Gastrocnemius medialis (tissue), 4 donors: ENCODE measurements at regions of chr1 and their contacts with region 1.

Region 1: GRCh38 chr1:173202430-173203145 is 4.5 kb downstream of the TNFSF4 start:
- DNase-seq: no peak
- ATAC-seq: peak in 1 of 2 donors; percentile 57
- H3K4me3 ChIP-seq: no peak overlapping the region
- H3K27ac ChIP-seq: no peak overlapping the region
- H3K4me1 ChIP-seq: no peaks in the 10 kb centered on the region
- H3K27me3 ChIP-seq: no peaks in the 10 kb centered on the region
- CTCF ChIP-seq: peak; percentile 15 to 54 (median 35)
- POLR2A ChIP-seq: no peak

Region 2: DNA sequence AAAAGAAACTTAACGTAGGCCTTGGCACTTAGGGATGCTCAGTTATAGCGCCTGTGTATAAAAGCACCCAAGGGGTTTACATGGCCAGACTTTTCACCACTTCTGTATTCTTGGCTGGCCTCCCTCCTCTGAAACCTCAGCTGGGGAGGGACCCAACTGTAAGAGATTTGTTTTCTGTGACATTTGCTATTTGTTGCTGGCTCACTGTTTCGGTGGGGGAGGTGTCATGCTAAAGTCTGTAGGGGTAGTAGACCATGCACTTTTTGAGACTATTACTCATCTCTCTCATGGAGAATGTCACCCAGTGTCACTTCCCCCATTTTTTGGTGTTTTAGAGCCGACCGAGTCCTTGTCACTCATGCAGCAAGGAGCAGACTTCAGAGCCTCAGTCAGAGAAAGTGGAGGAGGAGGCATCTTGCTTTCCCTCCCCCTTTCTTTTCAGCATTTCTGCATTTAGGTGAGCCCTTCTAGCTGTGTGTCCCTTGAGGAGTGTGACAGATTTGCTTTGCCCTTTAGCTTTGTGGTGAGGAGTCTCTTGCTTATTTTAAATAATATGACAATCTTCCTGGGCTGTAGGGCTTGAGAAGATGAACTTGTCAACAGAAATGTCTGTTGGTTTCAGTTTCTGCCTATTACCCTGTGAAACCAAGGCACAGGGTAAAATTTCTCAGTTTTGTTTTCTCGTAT is 383.6 kb before region 1 on chr1:
- in situ Hi-C with region 1: loop called in 1 of 4 experiments (anchors 25 kb)
- intact Hi-C with region 1: no loop called
- DNase-seq: no peak
- ATAC-seq: no peak
- H3K4me3 ChIP-seq: no peak overlapping the region
- H3K27ac ChIP-seq: no peak overlapping the region
- H3K4me1 ChIP-seq: peaks cover 0 to 2% of the 10 kb centered on the region in 2 donors
- H3K27me3 ChIP-seq: no peaks in the 10 kb centered on the region
- CTCF ChIP-seq: no peak
- POLR2A ChIP-seq: no peak

Region 3: GRCh38 chr1:172826096-172826743 is 376.4 kb before region 1 on chr1:
- in situ Hi-C with region 1: loop called in 3 of 4 experiments (anchors 5 to 25 kb)
- intact Hi-C with region 1: loop called (anchors 2 kb)
- DNase-seq: peak; percentile 32 to 37
- ATAC-seq: peak; percentile 73 to 81
- H3K4me3 ChIP-seq: peak overlapping the region in 2 of 4 donors; percentile 10 to 18
- H3K27ac ChIP-seq: peak overlapping the region; percentile 62 to 76 (median 66)
- H3K4me1 ChIP-seq: no peaks in the 10 kb centered on the region
- H3K27me3 ChIP-seq: no peaks in the 10 kb centered on the region
- CTCF ChIP-seq: peak in 3 of 5 experiments; percentile 29 to 43 (median 35)
- POLR2A ChIP-seq: peak in 1 of 2 donors; percentile 34